Psoas muscle (tissue), 8 donors: ENCODE measurements at regions of chr9 and their contacts with region 1.

Region 1: GRCh38 chr9:36064448-36065037 is 27.8 kb downstream of the RECK start:
- DNase-seq: no peak
- ATAC-seq: peak in 1 of 4 donors; percentile 76
- H3K4me3 ChIP-seq: no peak overlapping the region
- H3K27ac ChIP-seq: no peak overlapping the region
- H3K4me1 ChIP-seq: no peaks in the 10 kb centered on the region
- H3K27me3 ChIP-seq: no peaks in the 10 kb centered on the region
- CTCF ChIP-seq: no peak

Region 2: GRCh38 chr9:35945341-35946018 is 119.1 kb before region 1 on chr9:
- intact Hi-C with region 1: no loop called
- DNase-seq: peak; percentile 86 to 90
- ATAC-seq: peak; percentile 73 to 89 (median 82)
- H3K4me3 ChIP-seq: peak overlapping the region; percentile 45
- H3K27ac ChIP-seq: peak overlapping the region; percentile 6
- H3K4me1 ChIP-seq: peaks cover 7% of the 10 kb centered on the region
- H3K27me3 ChIP-seq: no peaks in the 10 kb centered on the region
- CTCF ChIP-seq: peak; percentile 78

Region 3: DNA sequence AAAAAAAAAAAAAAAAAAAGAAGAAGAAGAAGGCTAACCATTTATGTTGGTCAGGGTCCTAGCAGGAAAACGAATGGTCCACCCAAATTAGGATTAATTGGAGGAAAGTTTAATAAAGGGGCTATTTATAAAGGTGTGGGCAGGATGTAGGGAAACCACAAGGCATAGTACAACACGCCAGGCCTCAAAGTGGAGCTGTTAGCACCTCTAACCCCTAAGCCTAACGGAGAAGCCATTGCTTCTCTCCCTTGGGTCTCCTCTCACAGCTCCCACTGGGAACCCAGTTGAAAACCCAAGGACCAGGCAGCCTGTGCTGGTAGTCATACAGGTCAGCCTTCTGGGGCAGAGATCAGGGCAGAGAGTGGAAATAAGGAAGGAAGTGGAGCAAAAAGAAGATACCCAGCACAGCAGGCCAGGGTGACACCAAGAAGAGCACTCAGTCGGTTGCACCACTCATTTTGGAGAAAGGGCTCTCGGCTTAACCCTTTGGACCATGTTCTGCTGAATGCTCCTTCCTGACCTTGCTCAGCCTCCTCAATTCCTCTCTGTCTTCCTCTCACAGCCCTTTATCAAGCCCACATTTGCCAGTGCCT is 63.2 kb after region 1 on chr9:
- intact Hi-C with region 1: loop called in 1 of 2 experiments (anchors 10 kb)
- DNase-seq: no peak
- ATAC-seq: no peak
- H3K4me3 ChIP-seq: no peak overlapping the region
- H3K27ac ChIP-seq: no peak overlapping the region
- H3K4me1 ChIP-seq: no peaks in the 10 kb centered on the region
- H3K27me3 ChIP-seq: no peaks in the 10 kb centered on the region
- CTCF ChIP-seq: no peak

Region 4: DNA sequence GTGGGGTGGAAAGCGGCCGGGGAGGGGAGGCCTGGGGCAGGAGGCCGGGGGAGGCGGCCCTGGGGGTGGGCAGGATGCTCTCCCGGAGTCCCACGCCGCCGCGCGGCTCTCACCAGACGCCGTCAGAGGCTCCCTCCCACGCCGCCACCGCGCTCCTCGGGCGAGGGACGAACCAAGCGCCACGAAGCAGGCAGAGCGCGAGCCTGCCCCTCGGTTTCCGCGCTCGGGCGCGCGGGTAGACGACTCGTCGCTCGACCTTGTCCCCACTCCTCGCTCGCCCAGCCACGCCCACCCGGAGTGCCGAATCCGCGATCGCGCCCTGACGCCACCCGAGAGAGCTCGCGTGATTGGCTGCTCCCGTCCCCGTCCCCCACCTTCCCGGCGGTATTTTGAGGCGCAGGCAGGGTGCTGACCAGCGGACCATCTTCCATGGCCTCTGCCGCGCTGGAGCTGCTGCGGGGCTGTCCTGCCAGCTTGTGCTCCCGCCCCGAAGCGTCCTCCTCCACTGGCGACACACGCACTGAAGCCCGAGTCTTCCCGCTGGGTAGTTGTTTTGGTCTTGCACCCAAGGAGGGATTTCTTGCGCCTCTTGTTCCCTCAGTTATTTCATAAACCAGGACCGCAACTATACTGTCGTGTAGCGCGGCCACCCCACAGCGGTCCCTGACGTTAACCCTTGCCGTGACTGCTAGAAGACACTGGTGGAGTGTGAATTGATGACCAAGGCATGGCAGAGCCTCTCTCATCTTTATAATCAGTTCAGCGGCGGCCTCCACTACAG is 193.9 kb after region 1 on chr9 and contains the start of gene GNE:
- intact Hi-C with region 1: no loop called
- DNase-seq: peak; percentile 99
- ATAC-seq: peak; percentile 98 to 99 (median 98)
- H3K4me3 ChIP-seq: peak within 1 kb of the TSS; percentile 87
- H3K27ac ChIP-seq: peak within 1 kb of the TSS; percentile 95
- H3K4me1 ChIP-seq: peaks cover 12% of the 10 kb centered on the region
- H3K27me3 ChIP-seq: no peaks in the 10 kb centered on the region
- CTCF ChIP-seq: no peak
- total RNA-seq, gene GNE: 8.5 to 11.6 (median 9.4) TPM